ENCODE measurements at regions of chr15 and their contacts with region 1.

Region 1: GRCh38 chr15:59528965-59529402 is 82.6 kb upstream of the GCNT3 start:
- DNase-seq: peak; percentile 63 to 80 (median 71)
- ATAC-seq: peak; percentile 94
- H3K4me3 ChIP-seq: no peak overlapping the region
- H3K27ac ChIP-seq: no peak overlapping the region
- H3K4me1 ChIP-seq: no peaks in the 10 kb centered on the region
- H3K27me3 ChIP-seq: peaks cover 9 to 18% of the 10 kb centered on the region in 2 experiments; a peak in 4 of 5 replicates
- CTCF ChIP-seq: peak; percentile 77 to 88 (median 86)
- EP300 ChIP-seq: no peak
- POLR2A ChIP-seq: no peak
- RAD21 ChIP-seq: peak; percentile 79 to 86

Region 2: GRCh38 chr15:58980351-58980939 is 548.5 kb before region 1 on chr15:
- CTCF ChIA-PET with region 1: no interaction called
- POLR2A ChIA-PET with region 1: no interaction called
- in situ Hi-C with region 1: no loop called
- intact Hi-C with region 1: loop called (anchors 2 kb)
- DNase-seq: peak in 2 of 4 experiments; percentile 20 to 40
- ATAC-seq: peak; percentile 57; the same call in 2 of the 3 replicates
- H3K4me3 ChIP-seq: no peak overlapping the region
- H3K27ac ChIP-seq: no peak overlapping the region
- H3K4me1 ChIP-seq: no peaks in the 10 kb centered on the region
- H3K27me3 ChIP-seq: no peaks in the 10 kb centered on the region
- CTCF ChIP-seq: peak in 2 of 3 experiments; percentile 25 to 74; a peak in 4 of 6 replicates
- EP300 ChIP-seq: no peak
- POLR2A ChIP-seq: no peak
- RAD21 ChIP-seq: peak; percentile 75 to 82

Region 3: GRCh38 chr15:59622289-59622688 is 93.3 kb after region 1 on chr15:
- CTCF ChIA-PET with region 1: interaction called, 4 read pairs
- POLR2A ChIA-PET with region 1: no interaction called
- in situ Hi-C with region 1: no loop called
- intact Hi-C with region 1: loop called (anchors 2 kb)
- DNase-seq: peak; percentile 33 to 63 (median 45)
- ATAC-seq: peak; percentile 90
- H3K4me3 ChIP-seq: no peak overlapping the region
- H3K27ac ChIP-seq: no peak overlapping the region
- H3K4me1 ChIP-seq: no peaks in the 10 kb centered on the region; a peak in 1 of 5 replicates
- H3K27me3 ChIP-seq: peaks cover 23 to 27% of the 10 kb centered on the region in 2 experiments; a peak in 4 of 5 replicates
- CTCF ChIP-seq: peak; percentile 42 to 61 (median 53); a peak in 5 of 6 replicates
- EP300 ChIP-seq: no peak
- POLR2A ChIP-seq: no peak
- RAD21 ChIP-seq: peak; percentile 14 to 49; a peak in 2 of 4 replicates

Region 4: DNA sequence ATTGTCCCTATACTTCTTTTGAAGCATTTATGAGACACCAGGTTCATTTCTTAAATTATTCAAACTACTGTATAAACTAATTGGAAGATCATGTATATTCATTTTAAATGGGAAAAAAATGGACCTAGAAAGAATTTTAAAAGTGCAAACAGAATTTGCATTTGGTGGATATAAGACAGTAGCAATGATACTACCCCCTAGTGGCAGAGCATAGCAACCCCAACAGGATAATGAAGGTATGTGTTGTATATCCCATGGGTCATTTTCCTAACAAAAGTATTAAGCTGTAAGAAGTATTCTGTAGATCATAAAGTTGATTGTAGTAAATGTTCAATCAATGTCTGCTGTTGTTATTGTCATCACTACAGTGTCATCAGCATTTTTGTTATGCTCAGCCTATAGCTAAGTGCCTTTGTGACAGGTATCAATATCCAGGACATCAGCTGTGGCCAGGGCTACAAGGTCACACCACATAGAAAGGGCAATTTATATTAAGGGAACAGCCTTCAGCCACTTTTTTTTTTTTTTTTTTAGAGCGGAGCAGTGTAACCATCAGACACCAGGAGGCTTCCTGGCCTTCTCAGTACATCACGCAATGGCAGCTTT is 650.9 kb after region 1 on chr15:
- CTCF ChIA-PET with region 1: no interaction called
- POLR2A ChIA-PET with region 1: no interaction called
- in situ Hi-C with region 1: no loop called
- intact Hi-C with region 1: loop called (anchors 10 kb)
- DNase-seq: peak; percentile 24 to 42 (median 34)
- ATAC-seq: peak; percentile 86
- H3K4me3 ChIP-seq: no peak overlapping the region
- H3K27ac ChIP-seq: no peak overlapping the region
- H3K4me1 ChIP-seq: no peaks in the 10 kb centered on the region
- H3K27me3 ChIP-seq: peaks cover 6 to 9% of the 10 kb centered on the region in 2 experiments; a peak in 2 of 5 replicates
- CTCF ChIP-seq: peak; percentile 45 to 77 (median 61); a peak in 5 of 6 replicates
- EP300 ChIP-seq: no peak
- POLR2A ChIP-seq: no peak
- RAD21 ChIP-seq: peak; percentile 71 to 79